Ascending aorta (tissue), 2 donors: ENCODE measurements at regions of chr15 and their contacts with region 1.

Region 1: GRCh38 chr15:71329497-71330260 is 214.4 kb downstream of the THSD4 start:
- DNase-seq: peak; percentile 49 to 88
- H3K4me3 ChIP-seq: no peak overlapping the region
- H3K27ac ChIP-seq: peak overlapping the region; percentile 91 to 92
- H3K4me1 ChIP-seq: peaks cover 5 to 64% of the 10 kb centered on the region in 2 donors
- H3K27me3 ChIP-seq: no peaks in the 10 kb centered on the region
- CTCF ChIP-seq: no peak

Region 2: GRCh38 chr15:71079208-71080021 is 250.3 kb before region 1 on chr15:
- intact Hi-C with region 1: loop called (anchors 5 kb)
- DNase-seq: peak in 1 of 2 donors; percentile 90
- H3K4me3 ChIP-seq: no peak overlapping the region
- H3K27ac ChIP-seq: peak overlapping the region; percentile 93 to 95
- H3K4me1 ChIP-seq: peaks cover 5 to 44% of the 10 kb centered on the region in 2 donors
- H3K27me3 ChIP-seq: no peaks in the 10 kb centered on the region
- CTCF ChIP-seq: no peak

Region 3: GRCh38 chr15:71294886-71295638 is 34.6 kb before region 1 on chr15:
- intact Hi-C with region 1: loop called (anchors 1 kb)
- DNase-seq: peak in 1 of 2 donors; percentile 81
- H3K4me3 ChIP-seq: no peak overlapping the region
- H3K27ac ChIP-seq: peak overlapping the region; percentile 62 to 80
- H3K4me1 ChIP-seq: peaks cover 12 to 26% of the 10 kb centered on the region in 2 donors
- H3K27me3 ChIP-seq: no peaks in the 10 kb centered on the region
- CTCF ChIP-seq: no peak

Region 4: GRCh38 chr15:71306538-71306937 is 23.1 kb before region 1 on chr15:
- intact Hi-C with region 1: no loop called
- DNase-seq: no peak
- H3K4me3 ChIP-seq: no peak overlapping the region
- H3K27ac ChIP-seq: no peak overlapping the region
- H3K4me1 ChIP-seq: peaks cover 8 to 24% of the 10 kb centered on the region in 2 donors
- H3K27me3 ChIP-seq: no peaks in the 10 kb centered on the region
- CTCF ChIP-seq: no peak

Region 5: DNA sequence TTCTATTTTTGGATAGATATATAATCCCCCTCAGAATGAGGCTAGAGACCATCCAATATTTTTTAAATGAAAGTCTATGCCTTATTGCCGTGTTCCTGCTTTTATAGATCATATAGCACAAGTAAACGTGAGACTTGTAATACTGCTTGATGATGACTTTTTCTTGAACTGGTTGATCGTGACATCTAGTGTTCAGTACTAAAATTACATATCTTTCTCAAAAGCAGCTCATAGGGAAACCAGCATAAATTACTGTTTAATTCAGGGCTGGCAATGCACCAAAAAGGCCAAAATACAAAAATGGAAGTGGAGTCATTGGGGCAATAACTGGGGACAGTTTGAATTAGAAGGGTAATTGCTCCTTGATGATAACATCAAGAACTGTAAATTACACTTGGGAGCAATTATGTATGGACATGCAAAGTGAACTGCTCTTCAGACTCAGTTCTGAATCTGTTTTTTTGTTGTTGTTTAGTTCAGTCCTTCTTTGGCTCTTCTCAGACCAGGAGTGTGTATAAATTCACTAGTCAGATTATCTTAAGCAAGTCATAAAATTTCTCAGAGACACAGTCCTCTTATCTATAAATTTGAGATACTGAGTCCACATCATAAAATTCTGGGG is 110.9 kb after region 1 on chr15:
- intact Hi-C with region 1: loop called (anchors 5 kb)
- DNase-seq: no peak
- H3K4me3 ChIP-seq: no peak overlapping the region
- H3K27ac ChIP-seq: no peak overlapping the region
- H3K4me1 ChIP-seq: peaks cover 1 to 19% of the 10 kb centered on the region in 2 donors
- H3K27me3 ChIP-seq: no peaks in the 10 kb centered on the region
- CTCF ChIP-seq: peak; percentile 60 to 75 (median 62)